PC-3 (cell line): ENCODE measurements at regions of chr7 and their contacts with region 1.

Region 1: GRCh38 chr7:18013936-18014335 is 13.7 kb downstream of the PRPS1L1 start:
- DNase-seq: peak; percentile 68
- ATAC-seq: peak; percentile 95
- H3K4me3 ChIP-seq: no peak overlapping the region
- H3K27ac ChIP-seq: peak overlapping the region; percentile 52
- H3K4me1 ChIP-seq: peaks cover 25% of the 10 kb centered on the region
- H3K27me3 ChIP-seq: no peaks in the 10 kb centered on the region
- CTCF ChIP-seq: no peak

Region 2: GRCh38 chr7:17535776-17536175 is 478.2 kb before region 1 on chr7:
- CTCF ChIA-PET with region 1: no interaction called
- POLR2A ChIA-PET with region 1: no interaction called
- intact Hi-C with region 1: no loop called
- DNase-seq: no peak
- ATAC-seq: no peak
- H3K4me3 ChIP-seq: no peak overlapping the region
- H3K27ac ChIP-seq: no peak overlapping the region
- H3K4me1 ChIP-seq: peaks cover 26% of the 10 kb centered on the region
- H3K27me3 ChIP-seq: no peaks in the 10 kb centered on the region
- CTCF ChIP-seq: no peak

Region 3: GRCh38 chr7:17910377-17910776 is 103.6 kb before region 1 on chr7:
- CTCF ChIA-PET with region 1: no interaction called
- POLR2A ChIA-PET with region 1: interaction called, 11 read pairs
- intact Hi-C with region 1: no loop called
- DNase-seq: no peak
- ATAC-seq: no peak
- H3K4me3 ChIP-seq: no peak overlapping the region
- H3K27ac ChIP-seq: no peak overlapping the region
- H3K4me1 ChIP-seq: peaks cover 11% of the 10 kb centered on the region
- H3K27me3 ChIP-seq: no peaks in the 10 kb centered on the region
- CTCF ChIP-seq: no peak

Region 4: DNA sequence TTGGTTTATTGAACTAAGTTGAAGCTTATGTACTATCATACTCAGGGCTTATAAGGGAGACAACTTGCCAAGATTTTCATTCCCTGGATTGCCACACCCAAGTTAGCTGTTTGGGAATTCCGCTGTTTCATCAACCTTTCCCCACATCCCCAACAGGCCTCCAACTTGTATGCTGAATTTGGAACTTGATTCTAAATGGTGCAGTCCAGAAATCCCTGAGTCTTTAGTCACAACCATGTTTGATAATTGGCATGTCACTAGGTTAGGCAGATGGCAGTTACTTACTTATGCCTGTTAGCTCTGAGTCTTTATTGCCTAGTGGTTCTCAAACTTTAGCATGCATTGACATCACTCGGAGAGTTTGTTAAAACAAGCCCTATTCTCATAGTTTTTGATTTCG is 149.2 kb after region 1 on chr7:
- CTCF ChIA-PET with region 1: no interaction called
- POLR2A ChIA-PET with region 1: interaction called, 17 read pairs
- intact Hi-C with region 1: no loop called
- DNase-seq: no peak
- ATAC-seq: no peak
- H3K4me3 ChIP-seq: no peak overlapping the region
- H3K27ac ChIP-seq: no peak overlapping the region
- H3K4me1 ChIP-seq: peaks cover 7% of the 10 kb centered on the region; the same call in 1 of the 2 replicates
- H3K27me3 ChIP-seq: no peaks in the 10 kb centered on the region
- CTCF ChIP-seq: no peak